ENCODE measurements at regions of chr5 and their contacts with region 1.

Region 1: GRCh38 chr5:172106511-172107356 is 81.3 kb downstream of the STK10 start:
- DNase-seq: peak in 1 of 2 donors; percentile 57
- H3K4me3 ChIP-seq: peak overlapping the region in 1 of 2 donors; percentile 7
- H3K27ac ChIP-seq: no peak overlapping the region
- H3K4me1 ChIP-seq: peaks cover 0 to 49% (median 29%) of the 10 kb centered on the region in 4 donors
- H3K27me3 ChIP-seq: no peaks in the 10 kb centered on the region
- CTCF ChIP-seq: peak; percentile 80 to 99

Region 2: DNA sequence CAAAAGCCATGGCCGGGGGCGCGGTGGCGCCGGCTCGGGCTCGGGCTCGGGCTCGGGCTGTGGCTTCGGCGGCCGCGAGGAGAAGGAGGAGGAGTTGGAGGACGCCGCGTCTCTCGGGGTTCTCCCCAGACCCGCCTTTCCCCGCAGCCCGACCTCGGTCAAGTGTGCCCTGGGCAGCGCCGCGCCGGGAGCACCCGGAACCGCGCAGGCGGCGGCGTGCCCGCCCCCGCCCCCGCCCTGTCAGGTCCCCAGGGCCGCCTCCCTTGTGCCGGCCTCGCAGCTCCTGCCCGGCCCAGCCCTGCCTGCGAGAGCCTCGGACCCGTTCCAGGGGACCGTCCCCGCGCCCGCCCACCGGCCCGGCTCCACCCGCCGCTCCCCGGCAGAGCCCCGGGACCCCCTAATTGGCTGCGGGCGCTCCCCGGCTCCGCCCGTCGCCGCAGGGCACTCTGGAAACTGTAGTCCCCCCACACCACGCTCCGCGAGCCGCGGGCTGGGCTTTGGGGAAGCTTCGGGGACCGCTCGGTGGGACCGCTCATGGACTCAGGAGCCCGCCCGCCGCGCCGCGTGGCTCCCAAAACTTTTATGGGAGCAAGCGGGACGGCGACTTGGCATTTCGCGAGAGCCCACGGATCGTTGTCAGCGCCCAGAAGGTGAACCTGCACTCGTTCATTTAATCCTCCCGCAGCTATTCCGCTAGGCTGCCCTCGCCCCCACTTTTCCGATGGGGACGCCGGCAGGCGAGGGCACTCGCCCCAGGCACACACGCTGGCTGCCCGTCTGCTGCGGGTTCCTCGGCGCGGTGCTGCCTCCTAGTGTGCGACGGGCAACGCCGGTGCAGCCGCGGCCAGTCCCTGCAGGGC is 81.5 kb after region 1 on chr5 and contains the start of gene STK10:
- intact Hi-C with region 1: loop called (anchors 1 kb)
- DNase-seq: peak; percentile 88 to 96
- H3K4me3 ChIP-seq: peak within 1 kb of the TSS; percentile 87 to 94
- H3K27ac ChIP-seq: peak within 1 kb of the TSS; percentile 82 to 92
- H3K4me1 ChIP-seq: peaks cover 0 to 14% (median 8%) of the 10 kb centered on the region in 4 donors
- H3K27me3 ChIP-seq: no peaks in the 10 kb centered on the region
- CTCF ChIP-seq: peak; percentile 78 to 91